ENCODE measurements at regions of chr12 and their contacts with region 1.

Region 1: GRCh38 chr12:94074980-94075928 is 73.1 kb upstream of the PLXNC1 start:
- DNase-seq: peak; percentile 29 to 75 (median 48)
- H3K4me3 ChIP-seq: no peak overlapping the region
- H3K27ac ChIP-seq: no peak overlapping the region
- H3K4me1 ChIP-seq: peaks cover 8% of the 10 kb centered on the region
- H3K27me3 ChIP-seq: no peaks in the 10 kb centered on the region
- CTCF ChIP-seq: peak; percentile 28 to 33 (median 30)
- EP300 ChIP-seq: no peak
- POLR2A ChIP-seq: no peak

Region 2: DNA sequence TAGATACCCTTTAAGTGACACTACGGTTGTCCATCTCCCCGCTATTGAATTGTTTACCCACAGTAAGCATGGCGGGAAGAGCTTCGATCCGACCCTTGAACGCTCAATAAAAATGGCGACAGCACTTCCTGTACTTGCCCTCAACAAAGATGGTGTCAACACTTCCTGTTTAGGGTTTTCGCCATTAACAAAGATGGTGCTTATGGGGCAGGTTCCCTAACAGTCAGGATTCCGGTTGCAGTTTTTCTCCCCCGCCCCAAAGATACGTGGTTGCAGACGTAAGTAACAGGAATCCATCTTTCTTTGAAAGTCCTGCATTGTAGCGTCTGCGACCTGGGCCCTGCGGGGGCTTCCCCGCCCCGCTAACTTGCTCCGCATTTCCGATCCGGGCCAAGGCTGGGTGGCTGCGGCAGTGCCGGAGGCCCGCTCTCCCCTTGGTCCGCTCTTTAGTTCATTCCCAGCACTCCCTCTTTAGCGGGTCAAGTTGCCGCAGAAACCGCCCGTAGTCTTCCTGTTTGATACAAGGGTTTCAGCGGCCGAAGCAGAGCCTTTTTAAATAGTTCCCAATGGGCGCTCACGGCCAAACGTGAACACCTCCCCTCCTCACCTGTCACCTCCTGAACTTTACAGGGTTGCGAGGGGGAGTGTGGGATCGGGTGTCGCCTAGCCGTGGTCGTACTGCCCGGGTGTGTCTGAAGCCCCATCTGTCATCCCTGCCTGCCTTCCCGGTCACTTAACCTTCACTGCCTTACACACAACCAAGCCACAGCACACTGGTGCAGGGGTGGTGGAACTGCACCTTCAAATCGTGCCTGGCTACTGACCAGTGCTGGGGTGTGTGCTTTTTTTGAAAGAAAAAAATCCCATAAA is 397.8 kb before region 1 on chr12 and contains the start of gene CRADD:
- intact Hi-C with region 1: loop called in 1 of 4 experiments (anchors 10 kb)
- DNase-seq: peak; percentile 78 to 87 (median 83)
- H3K4me3 ChIP-seq: peak within 1 kb of the TSS; percentile 91
- H3K27ac ChIP-seq: peak within 1 kb of the TSS; percentile 86 to 95
- H3K4me1 ChIP-seq: peaks cover 6% of the 10 kb centered on the region
- H3K27me3 ChIP-seq: no peaks in the 10 kb centered on the region
- CTCF ChIP-seq: no peak
- EP300 ChIP-seq: peak; percentile 16
- POLR2A ChIP-seq: peak; percentile 70
- total RNA-seq, gene CRADD: 11.4 to 67.8 (median 16.9) TPM

Region 3: DNA sequence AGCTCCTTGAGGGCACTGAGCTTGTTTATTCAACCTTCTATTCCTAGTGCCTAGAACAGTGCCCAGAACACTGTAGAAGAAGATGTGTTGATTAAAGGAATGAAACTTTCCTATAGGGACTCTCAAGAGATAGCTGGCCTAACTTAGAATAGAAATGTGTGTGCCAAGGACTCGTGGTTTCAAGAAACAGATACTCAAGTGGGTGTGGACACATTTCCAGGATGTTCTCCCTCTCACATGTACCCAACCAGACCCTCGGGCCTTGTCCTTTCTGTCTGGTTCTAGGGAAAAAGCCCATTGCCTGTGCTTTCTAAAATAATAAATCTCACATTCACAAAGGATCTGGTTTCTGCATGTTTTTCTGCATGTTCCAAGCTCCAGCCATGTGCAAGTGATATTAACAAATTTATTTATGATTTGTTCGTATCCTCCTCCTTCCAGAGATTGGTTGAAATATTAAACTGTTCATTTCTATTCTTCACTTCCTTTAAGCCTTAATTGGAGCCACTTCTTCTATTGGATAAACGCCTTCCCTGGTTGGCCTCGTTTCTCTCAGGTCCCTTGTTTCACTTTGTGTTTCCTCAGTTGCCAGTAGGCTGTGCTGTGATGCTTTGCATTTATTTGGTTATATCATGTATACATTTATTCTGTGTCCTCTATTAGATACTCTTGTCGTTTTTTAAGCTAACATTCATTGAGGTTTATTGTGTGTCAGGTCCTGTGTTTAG is 308.3 kb before region 1 on chr12:
- intact Hi-C with region 1: loop called in 1 of 4 experiments (anchors 10 kb)
- DNase-seq: peak in 1 of 5 donors; percentile 42
- H3K4me3 ChIP-seq: no peak overlapping the region
- H3K27ac ChIP-seq: no peak overlapping the region
- H3K4me1 ChIP-seq: peaks cover 6% of the 10 kb centered on the region
- H3K27me3 ChIP-seq: no peaks in the 10 kb centered on the region
- CTCF ChIP-seq: peak in 2 of 3 donors; percentile 51 to 54
- EP300 ChIP-seq: no peak
- POLR2A ChIP-seq: no peak